Endothelial cell of umbilical vein (primary cell): ENCODE measurements at regions of chr3 and their contacts with region 1.

Region 1: GRCh38 chr3:141452036-141452435 is 34.8 kb upstream of the RASA2 start:
- DNase-seq: peak; percentile 83
- H3K4me3 ChIP-seq: no peak overlapping the region
- H3K27ac ChIP-seq: no peak overlapping the region
- H3K4me1 ChIP-seq: peaks cover 12% of the 10 kb centered on the region
- H3K27me3 ChIP-seq: no peaks in the 10 kb centered on the region
- CTCF ChIP-seq: peak; percentile 59 to 62
- POLR2A ChIP-seq: no peak

Region 2: GRCh38 chr3:141000027-141000663 is 451.9 kb before region 1 on chr3:
- CTCF ChIA-PET with region 1: no interaction called
- POLR2A ChIA-PET with region 1: no interaction called
- dilution Hi-C with region 1: no loop called
- intact Hi-C with region 1: loop called (anchors 10 kb)
- DNase-seq: peak; percentile 51
- H3K4me3 ChIP-seq: no peak overlapping the region
- H3K27ac ChIP-seq: no peak overlapping the region
- H3K4me1 ChIP-seq: no peaks in the 10 kb centered on the region
- H3K27me3 ChIP-seq: peaks cover 0 to 3% of the 10 kb centered on the region in 2 experiments
- CTCF ChIP-seq: peak; percentile 47 to 68
- POLR2A ChIP-seq: no peak

Region 3: GRCh38 chr3:141303481-141304223 is 148.4 kb before region 1 on chr3:
- CTCF ChIA-PET with region 1: interaction called, 351 read pairs
- POLR2A ChIA-PET with region 1: interaction called, 7 read pairs
- dilution Hi-C with region 1: no loop called
- intact Hi-C with region 1: loop called (anchors 1 kb)
- DNase-seq: peak; percentile 86
- H3K4me3 ChIP-seq: no peak overlapping the region
- H3K27ac ChIP-seq: no peak overlapping the region
- H3K4me1 ChIP-seq: no peaks in the 10 kb centered on the region
- H3K27me3 ChIP-seq: peaks cover 0 to 6% of the 10 kb centered on the region in 2 experiments
- CTCF ChIP-seq: peak; percentile 53 to 68
- POLR2A ChIP-seq: no peak

Region 4: DNA sequence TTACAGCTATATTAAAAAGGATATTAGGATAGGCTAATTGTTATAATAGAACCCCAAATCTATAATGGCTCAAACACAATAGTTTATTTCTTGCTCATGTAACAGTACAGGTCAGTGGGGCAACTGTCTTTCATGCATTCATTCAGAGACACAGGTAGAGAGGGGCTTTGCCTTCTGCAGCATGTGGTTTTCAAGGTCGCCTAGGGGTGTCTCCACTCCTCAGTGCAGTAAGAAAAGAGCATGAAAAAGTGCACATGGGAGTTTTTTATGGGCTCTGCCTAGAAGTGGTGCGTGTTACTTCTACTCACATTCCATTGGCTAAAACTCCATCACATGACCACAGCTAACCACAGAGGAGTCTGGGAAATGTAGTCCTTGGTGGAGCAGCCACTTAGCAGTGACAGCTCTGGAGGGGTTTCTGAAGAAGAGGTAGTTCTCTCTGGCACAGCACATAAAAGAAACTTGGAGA is 81.9 kb before region 1 on chr3:
- CTCF ChIA-PET with region 1: interaction called, 16 read pairs
- POLR2A ChIA-PET with region 1: no interaction called
- dilution Hi-C with region 1: no loop called
- intact Hi-C with region 1: no loop called
- DNase-seq: peak; percentile 94
- H3K4me3 ChIP-seq: peak overlapping the region in 1 of 3 experiments; percentile 86
- H3K27ac ChIP-seq: peak overlapping the region; percentile 96
- H3K4me1 ChIP-seq: peaks cover 47% of the 10 kb centered on the region
- H3K27me3 ChIP-seq: no peaks in the 10 kb centered on the region
- CTCF ChIP-seq: peak; percentile 36 to 47
- POLR2A ChIP-seq: peak; percentile 41

Region 5: DNA sequence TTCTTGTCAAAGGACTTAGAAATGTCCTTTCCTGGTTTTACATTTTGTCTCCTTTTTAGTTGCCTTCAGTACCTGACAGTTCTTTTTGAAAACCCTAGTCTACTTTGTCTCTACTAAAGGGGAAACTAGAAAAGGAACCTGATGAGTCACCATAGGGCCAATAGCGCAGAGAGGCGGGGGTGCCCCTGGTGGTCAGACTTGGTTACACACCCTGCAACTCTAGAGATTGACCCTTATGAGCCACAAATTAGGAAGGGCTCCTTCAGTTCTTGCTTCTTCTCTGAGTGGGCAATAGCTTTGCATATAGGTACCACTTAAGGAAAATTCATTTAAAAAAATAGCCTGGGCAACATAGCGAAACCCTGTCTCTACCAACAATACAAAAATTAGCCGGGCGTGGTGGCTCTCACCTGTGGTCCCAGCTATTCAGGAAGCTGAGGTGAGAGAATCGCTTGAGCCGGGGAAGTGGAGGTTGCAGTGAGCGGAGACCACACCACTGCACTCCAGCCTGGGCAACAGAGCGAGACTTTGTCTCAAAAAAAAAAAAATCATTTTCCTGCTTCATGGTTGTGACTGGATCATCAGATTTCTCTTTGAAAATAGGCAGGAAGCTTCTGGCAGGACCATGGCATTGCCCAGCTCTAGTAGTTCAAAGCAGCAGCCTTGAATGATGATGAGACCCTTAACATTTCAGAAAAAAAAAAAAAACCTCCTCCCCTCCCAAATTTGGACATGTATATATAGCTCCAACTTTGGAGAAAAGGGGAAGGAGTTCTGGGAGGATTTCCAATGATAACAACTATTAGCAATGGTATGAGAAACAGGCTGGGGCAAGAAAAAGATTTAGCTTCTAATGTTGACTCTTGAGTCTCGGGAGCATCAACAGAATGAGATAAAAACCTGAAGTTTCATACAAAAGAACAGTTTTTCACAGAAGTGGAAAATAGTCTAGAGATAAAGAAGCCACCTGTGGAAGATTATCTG is 10.4 kb before region 1 on chr3:
- CTCF ChIA-PET with region 1: interaction called, 20 read pairs
- POLR2A ChIA-PET with region 1: no interaction called
- dilution Hi-C with region 1: no loop called
- intact Hi-C with region 1: no loop called
- DNase-seq: peak; percentile 85
- H3K4me3 ChIP-seq: no peak overlapping the region
- H3K27ac ChIP-seq: peak overlapping the region; percentile 2
- H3K4me1 ChIP-seq: peaks cover 13% of the 10 kb centered on the region
- H3K27me3 ChIP-seq: no peaks in the 10 kb centered on the region
- CTCF ChIP-seq: peak; percentile 91 to 96
- POLR2A ChIP-seq: no peak

Region 6: GRCh38 chr3:141561426-141562034 is 109.5 kb after region 1 on chr3:
- CTCF ChIA-PET with region 1: interaction called, 222 read pairs
- POLR2A ChIA-PET with region 1: no interaction called
- dilution Hi-C with region 1: no loop called
- intact Hi-C with region 1: no loop called
- DNase-seq: peak; percentile 85
- H3K4me3 ChIP-seq: no peak overlapping the region
- H3K27ac ChIP-seq: no peak overlapping the region
- H3K4me1 ChIP-seq: peaks cover 15% of the 10 kb centered on the region
- H3K27me3 ChIP-seq: no peaks in the 10 kb centered on the region
- CTCF ChIP-seq: peak; percentile 72 to 75
- POLR2A ChIP-seq: no peak

Region 7: DNA sequence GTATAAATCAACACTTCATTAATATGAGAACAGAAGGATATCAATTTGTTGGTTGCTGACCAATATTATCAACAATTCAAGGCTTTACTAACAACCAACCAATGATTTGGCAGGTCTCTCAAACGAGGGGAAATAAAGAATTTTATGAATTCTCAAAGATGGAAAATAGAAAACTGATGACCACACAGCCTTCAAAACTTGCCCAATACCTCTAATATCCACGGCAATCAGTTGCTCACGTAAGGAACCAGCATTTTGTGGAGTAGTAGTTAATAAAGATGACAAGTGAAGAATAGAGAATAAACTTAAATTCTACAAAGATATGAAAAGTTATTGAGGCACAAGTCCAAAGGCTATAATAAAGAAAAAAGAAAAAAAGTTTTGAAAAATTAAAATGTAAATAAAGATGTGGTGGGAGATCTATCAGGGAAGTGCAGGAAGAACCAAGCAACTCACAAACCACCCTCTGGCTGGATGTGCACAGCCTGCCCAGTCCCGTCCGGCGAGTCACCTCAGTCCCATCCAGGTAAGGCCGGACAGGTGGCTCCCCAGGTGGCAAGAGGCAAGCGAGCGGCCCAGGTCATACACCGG is 772.5 kb after region 1 on chr3:
- CTCF ChIA-PET with region 1: no interaction called
- POLR2A ChIA-PET with region 1: no interaction called
- dilution Hi-C with region 1: no loop called
- intact Hi-C with region 1: no loop called
- DNase-seq: no peak
- H3K4me3 ChIP-seq: peak overlapping the region; percentile 64 to 74 (median 72)
- H3K27ac ChIP-seq: peak overlapping the region; percentile 69
- H3K4me1 ChIP-seq: peaks cover 6% of the 10 kb centered on the region
- H3K27me3 ChIP-seq: no peaks in the 10 kb centered on the region
- CTCF ChIP-seq: no peak
- POLR2A ChIP-seq: no peak